PC-9 (cell line): ENCODE measurements at regions of chr2 and their contacts with region 1.

Region 1: GRCh38 chr2:101341901-101342624 is 33.6 kb upstream of the RNF149 start:
- DNase-seq: peak in 1 of 2 experiments; percentile 71
- H3K4me3 ChIP-seq: no peak overlapping the region
- H3K27ac ChIP-seq: no peak overlapping the region
- H3K4me1 ChIP-seq: peaks cover 39% of the 10 kb centered on the region
- H3K27me3 ChIP-seq: no peaks in the 10 kb centered on the region
- CTCF ChIP-seq: peak; percentile 94

Region 2: DNA sequence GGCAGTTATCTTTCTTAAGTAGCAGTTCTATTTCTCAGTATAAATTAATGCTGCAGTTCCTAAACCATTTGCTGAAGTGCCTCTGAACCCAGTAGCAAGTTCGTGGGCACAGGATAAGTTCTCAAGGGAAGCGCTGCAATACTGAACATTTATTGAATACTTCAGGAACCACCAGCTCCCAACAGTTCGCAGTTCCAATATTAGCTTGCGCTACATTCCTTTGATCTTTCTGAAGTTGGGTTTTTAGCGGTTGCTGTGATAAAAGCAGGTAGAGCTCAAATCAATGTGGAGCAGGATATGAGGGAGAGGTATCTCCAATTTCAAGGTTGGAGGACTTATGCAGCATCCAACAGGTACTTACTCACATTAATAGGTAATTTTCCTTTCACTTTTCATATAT is 745.6 kb before region 1 on chr2:
- CTCF ChIA-PET with region 1: no interaction called
- POLR2A ChIA-PET with region 1: no interaction called
- intact Hi-C with region 1: loop called (anchors 5 kb)
- DNase-seq: no peak
- H3K4me3 ChIP-seq: no peak overlapping the region
- H3K27ac ChIP-seq: no peak overlapping the region
- H3K4me1 ChIP-seq: no peaks in the 10 kb centered on the region
- H3K27me3 ChIP-seq: no peaks in the 10 kb centered on the region
- CTCF ChIP-seq: no peak

Region 3: DNA sequence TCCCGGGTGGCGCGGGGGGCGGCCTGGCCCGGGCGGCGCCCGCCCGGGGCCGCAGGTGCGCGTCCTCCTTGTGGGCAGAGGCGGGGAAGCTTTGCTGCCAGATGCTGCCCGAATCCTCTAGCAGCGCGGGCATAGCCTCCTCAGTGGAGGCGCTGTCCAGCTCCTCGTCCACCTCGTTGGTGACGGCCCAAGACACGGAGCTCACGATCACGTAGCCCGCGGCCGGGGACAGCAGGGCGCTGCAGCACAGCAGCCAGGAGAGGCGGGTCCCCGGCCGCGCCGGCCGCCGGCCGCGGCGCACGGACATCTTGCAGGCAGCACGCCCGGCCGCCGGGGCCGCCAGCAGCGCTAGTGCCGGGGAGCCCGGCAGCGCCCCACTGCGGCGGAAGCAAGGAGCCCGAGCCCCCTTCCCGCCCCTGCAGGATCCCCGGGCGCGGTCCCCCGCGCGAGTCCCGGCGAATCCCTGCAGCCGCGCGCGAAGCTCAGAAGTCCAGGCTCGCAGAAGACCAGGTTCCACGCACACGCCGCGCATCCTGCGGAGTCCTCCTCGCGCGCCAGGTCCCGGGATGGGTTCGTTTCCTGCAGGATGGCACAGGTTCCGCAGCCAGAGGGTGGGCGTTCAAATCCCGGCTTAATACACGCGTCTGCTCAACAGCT is 45.2 kb after region 1 on chr2 and contains the start of gene CREG2:
- CTCF ChIA-PET with region 1: interaction called, 13 read pairs
- POLR2A ChIA-PET with region 1: interaction called, 6 read pairs
- intact Hi-C with region 1: loop called (anchors 5 kb)
- DNase-seq: peak; percentile 47 to 75
- H3K4me3 ChIP-seq: peak within 1 kb of the TSS; percentile 84
- H3K27ac ChIP-seq: peak within 1 kb of the TSS; percentile 80
- H3K4me1 ChIP-seq: peaks cover 26% of the 10 kb centered on the region
- H3K27me3 ChIP-seq: no peaks in the 10 kb centered on the region
- CTCF ChIP-seq: peak; percentile 69
- total RNA-seq, gene CREG2: 9.0 and 12.3 TPM in 2 replicates

Region 4: DNA sequence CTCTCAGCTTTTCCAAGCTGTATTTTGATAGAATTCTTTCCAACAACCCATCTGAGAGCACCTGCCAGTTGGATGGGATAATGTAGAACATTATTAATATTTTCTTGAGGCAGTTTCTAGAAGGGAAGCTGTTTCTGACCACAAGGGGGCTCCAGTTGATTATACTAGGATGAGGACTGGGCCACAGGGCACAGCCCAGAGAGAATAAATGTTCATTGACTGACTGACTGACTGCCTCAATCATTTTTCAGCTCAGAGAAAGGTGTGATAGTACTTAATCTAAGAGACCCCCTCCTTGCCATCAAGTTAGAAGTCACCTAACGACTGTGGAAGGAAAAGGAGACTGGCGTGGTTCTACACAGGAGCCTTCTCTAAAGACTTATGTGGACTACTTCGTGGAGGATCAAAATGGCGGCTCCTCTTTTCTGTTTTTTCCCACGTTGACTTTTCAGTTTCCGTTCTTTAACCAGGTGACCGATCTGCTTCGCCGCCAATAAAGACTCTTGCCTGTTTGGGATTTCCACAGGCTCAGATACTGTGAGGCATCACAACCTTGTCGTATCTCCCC is 77.1 kb after region 1 on chr2:
- CTCF ChIA-PET with region 1: interaction called, 3 read pairs
- POLR2A ChIA-PET with region 1: no interaction called
- intact Hi-C with region 1: loop called (anchors 1 kb)
- DNase-seq: peak; percentile 34 to 47
- H3K4me3 ChIP-seq: no peak overlapping the region
- H3K27ac ChIP-seq: no peak overlapping the region
- H3K4me1 ChIP-seq: 0 out of 2 replicates have a peak, but pooled peaks cover 5% of the 10 kb centered on the region
- H3K27me3 ChIP-seq: no peaks in the 10 kb centered on the region
- CTCF ChIP-seq: peak; percentile 90

Region 5: DNA sequence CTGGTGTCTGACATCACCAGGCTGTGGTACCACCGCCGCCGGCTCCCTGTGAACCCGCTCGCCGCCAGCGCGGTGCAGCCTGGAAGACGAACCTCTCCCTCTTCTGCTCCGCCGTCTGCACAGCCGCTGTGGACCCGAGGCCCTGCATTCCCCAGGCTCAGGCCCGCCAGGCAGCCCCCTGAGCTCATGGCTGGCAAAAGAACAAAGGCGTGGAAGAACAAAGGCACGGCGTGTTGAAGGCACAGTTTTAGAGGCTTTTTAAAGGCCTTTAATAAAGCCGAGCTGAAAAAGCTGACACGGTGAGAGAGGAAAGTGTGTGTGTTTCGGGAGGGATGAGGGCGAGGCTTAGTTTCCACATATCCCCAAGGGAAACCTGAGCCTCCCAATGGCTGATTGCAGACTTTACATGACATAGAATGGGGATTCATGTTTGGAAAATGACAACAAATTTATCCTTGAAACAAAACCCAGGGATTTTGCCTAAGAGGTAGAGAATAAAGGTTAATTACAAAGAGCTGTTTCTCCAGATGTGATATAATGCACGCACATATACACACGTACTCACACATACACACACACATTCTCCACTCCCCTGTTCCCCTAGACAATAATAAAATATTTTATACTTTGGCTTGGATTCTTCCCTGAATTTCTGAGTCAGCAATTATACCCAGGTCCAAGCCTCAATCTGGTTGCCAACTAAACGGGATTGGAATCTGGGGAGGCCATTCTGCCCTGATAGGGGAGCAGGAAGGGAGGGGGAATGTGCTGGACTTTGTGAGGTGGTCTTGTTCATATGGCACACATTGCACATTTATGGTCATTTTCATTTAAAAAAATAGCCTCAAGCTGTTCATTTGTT is 93.2 kb after region 1 on chr2:
- CTCF ChIA-PET with region 1: no interaction called
- POLR2A ChIA-PET with region 1: no interaction called
- intact Hi-C with region 1: no loop called
- DNase-seq: no peak
- H3K4me3 ChIP-seq: no peak overlapping the region
- H3K27ac ChIP-seq: no peak overlapping the region
- H3K4me1 ChIP-seq: no peaks in the 10 kb centered on the region
- H3K27me3 ChIP-seq: no peaks in the 10 kb centered on the region
- CTCF ChIP-seq: no peak

Region 6: DNA sequence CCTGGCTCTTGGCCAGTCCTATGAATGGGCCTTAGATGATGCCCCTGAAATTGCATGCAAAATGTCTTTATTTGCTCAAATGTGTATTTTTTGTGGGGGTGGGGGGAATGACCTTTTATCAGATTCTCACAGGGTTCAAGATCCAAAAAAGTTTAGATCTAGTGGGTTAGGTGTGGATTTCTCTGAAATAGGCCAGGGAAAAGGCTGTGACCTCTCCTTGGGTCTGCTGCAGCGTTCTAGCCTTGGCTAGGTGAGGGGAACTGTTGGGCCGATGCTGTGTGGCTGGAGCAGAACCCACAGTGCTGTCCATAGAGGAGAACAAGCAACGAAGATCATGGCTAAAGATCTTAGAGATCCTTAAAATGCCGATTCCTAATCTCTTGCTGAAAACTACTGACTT is 519.3 kb after region 1 on chr2:
- CTCF ChIA-PET with region 1: interaction called, 12 read pairs
- POLR2A ChIA-PET with region 1: interaction called, 5 read pairs
- intact Hi-C with region 1: no loop called
- DNase-seq: no peak
- H3K4me3 ChIP-seq: no peak overlapping the region
- H3K27ac ChIP-seq: no peak overlapping the region
- H3K4me1 ChIP-seq: peaks cover 30% of the 10 kb centered on the region
- H3K27me3 ChIP-seq: no peaks in the 10 kb centered on the region
- CTCF ChIP-seq: no peak